ENCODE measurements at regions of chr15 and their contacts with region 1.

Region 1: GRCh38 chr15:50003786-50004334 is 115.2 kb downstream of the ATP8B4 start:
- DNase-seq: peak; percentile 37
- ATAC-seq: peak; percentile 100
- H3K4me3 ChIP-seq: no peak overlapping the region
- H3K27ac ChIP-seq: no peak overlapping the region
- H3K4me1 ChIP-seq: no peaks in the 10 kb centered on the region
- H3K27me3 ChIP-seq: no peaks in the 10 kb centered on the region; a peak in 2 of 4 replicates
- CTCF ChIP-seq: peak; percentile 71 to 80 (median 79)
- EP300 ChIP-seq: no peak
- POLR2A ChIP-seq: no peak
- RAD21 ChIP-seq: peak; percentile 70

Region 2: DNA sequence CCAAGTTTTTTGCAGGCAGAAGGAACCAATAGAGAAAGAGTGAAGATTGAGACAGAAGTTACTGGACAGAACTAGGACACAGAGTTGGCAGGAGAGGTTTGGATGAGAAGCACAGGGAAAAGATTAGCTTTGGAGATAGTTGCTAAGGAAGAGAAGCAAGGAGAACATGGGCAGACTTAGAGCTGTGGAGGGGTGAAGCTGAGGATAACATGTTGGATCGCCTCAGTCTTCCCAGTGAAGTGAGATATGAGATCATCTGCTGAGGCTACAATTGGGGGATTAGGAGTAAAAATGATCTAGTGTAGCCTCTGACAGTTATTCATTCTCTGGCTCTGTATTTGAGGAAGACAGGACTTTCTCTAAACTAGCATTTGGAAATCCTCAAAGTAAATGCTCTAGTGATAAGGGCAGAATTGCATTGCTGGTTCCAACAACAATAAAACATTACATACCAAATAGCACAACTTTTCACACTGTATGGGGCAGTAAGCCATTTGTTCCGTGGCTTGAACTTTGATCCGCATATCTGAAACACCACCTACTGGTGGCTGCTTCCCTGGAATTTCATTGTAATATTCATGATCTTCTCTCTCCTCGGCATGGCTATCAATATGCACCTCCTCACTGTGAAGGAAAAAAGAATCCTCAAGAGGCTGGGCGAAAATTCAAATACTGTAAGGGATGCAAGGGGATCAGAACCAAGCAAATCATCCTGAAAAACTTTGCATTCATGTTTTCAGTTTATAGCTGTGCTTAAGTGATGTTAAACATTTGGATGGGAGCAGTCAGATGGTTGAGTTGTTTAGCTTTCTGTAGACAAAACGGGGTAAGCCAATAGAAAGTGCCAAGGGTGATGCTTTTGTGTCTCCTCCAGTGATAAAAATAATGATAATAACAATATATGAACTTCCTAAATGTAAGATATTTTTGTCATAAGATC is 1148.1 kb before region 1 on chr15:
- CTCF ChIA-PET with region 1: no interaction called
- POLR2A ChIA-PET with region 1: no interaction called
- RAD21 ChIA-PET with region 1: no interaction called
- SMC1A ChIA-PET with region 1: interaction called, 3 read pairs
- in situ Hi-C with region 1: loop called (anchors 10 kb)
- intact Hi-C with region 1: loop called (anchors 10 kb)
- DNase-seq: no peak
- ATAC-seq: no peak
- H3K4me3 ChIP-seq: no peak overlapping the region
- H3K27ac ChIP-seq: no peak overlapping the region
- H3K4me1 ChIP-seq: no peaks in the 10 kb centered on the region
- H3K27me3 ChIP-seq: no peaks in the 10 kb centered on the region
- CTCF ChIP-seq: peak in 1 of 3 experiments; percentile 25; a peak in 2 of 6 replicates
- EP300 ChIP-seq: no peak
- POLR2A ChIP-seq: no peak
- RAD21 ChIP-seq: 0 out of 2 replicates have a peak, but pooled peaks have one; percentile 10

Region 3: DNA sequence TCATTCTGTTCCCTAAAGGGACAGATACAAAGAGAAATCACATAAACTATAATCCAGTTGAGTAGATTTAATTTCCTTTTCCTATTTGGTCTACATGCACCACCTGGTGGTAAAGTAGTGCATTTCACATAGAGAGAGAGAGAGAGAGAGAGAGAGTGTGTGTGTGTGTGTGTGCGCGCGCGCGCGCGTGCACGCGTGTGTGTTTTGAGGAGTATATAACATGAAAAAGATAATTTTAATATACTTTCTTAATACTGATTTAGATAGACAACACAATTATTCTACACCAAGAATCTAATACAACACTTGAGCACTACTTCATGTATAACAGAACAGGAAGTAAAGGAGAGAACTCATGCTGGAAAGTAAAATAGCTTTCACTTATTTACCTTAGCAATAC is 581.9 kb before region 1 on chr15:
- CTCF ChIA-PET with region 1: interaction called, 27 read pairs
- POLR2A ChIA-PET with region 1: no interaction called
- RAD21 ChIA-PET with region 1: interaction called, 18 read pairs
- SMC1A ChIA-PET with region 1: interaction called, 20 read pairs
- in situ Hi-C with region 1: no loop called
- intact Hi-C with region 1: no loop called
- DNase-seq: peak; percentile 12
- ATAC-seq: peak; percentile 72
- H3K4me3 ChIP-seq: no peak overlapping the region
- H3K27ac ChIP-seq: no peak overlapping the region
- H3K4me1 ChIP-seq: no peaks in the 10 kb centered on the region
- H3K27me3 ChIP-seq: no peaks in the 10 kb centered on the region
- CTCF ChIP-seq: peak; percentile 57 to 78 (median 66)
- EP300 ChIP-seq: no peak
- POLR2A ChIP-seq: no peak
- RAD21 ChIP-seq: peak; percentile 80

Region 4: GRCh38 chr15:49979705-49980382 is 24.0 kb before region 1 on chr15:
- CTCF ChIA-PET with region 1: interaction called, 12 read pairs
- POLR2A ChIA-PET with region 1: interaction called, 4 read pairs
- RAD21 ChIA-PET with region 1: interaction called, 19 read pairs
- SMC1A ChIA-PET with region 1: interaction called, 19 read pairs
- in situ Hi-C with region 1: no loop called
- intact Hi-C with region 1: no loop called
- DNase-seq: no peak
- ATAC-seq: peak; percentile 53; the same call in 2 of the 3 replicates
- H3K4me3 ChIP-seq: no peak overlapping the region
- H3K27ac ChIP-seq: no peak overlapping the region
- H3K4me1 ChIP-seq: no peaks in the 10 kb centered on the region; the same call in 1 of the 2 replicates
- H3K27me3 ChIP-seq: no peaks in the 10 kb centered on the region; a peak in 1 of 4 replicates
- CTCF ChIP-seq: no peak
- EP300 ChIP-seq: no peak
- POLR2A ChIP-seq: no peak
- RAD21 ChIP-seq: no peak

Region 5: GRCh38 chr15:50046867-50047266 is 43.0 kb after region 1 on chr15:
- CTCF ChIA-PET with region 1: interaction called, 114 read pairs
- POLR2A ChIA-PET with region 1: interaction called, 7 read pairs
- RAD21 ChIA-PET with region 1: interaction called, 50 read pairs
- SMC1A ChIA-PET with region 1: interaction called, 53 read pairs
- in situ Hi-C with region 1: no loop called
- intact Hi-C with region 1: no loop called
- DNase-seq: no peak
- ATAC-seq: peak; percentile 56
- H3K4me3 ChIP-seq: no peak overlapping the region
- H3K27ac ChIP-seq: no peak overlapping the region
- H3K4me1 ChIP-seq: no peaks in the 10 kb centered on the region
- H3K27me3 ChIP-seq: no peaks in the 10 kb centered on the region
- CTCF ChIP-seq: no peak
- EP300 ChIP-seq: no peak
- POLR2A ChIP-seq: no peak
- RAD21 ChIP-seq: no peak

Region 6: GRCh38 chr15:50315814-50316630 is 312.2 kb after region 1 on chr15:
- CTCF ChIA-PET with region 1: interaction called, 14 read pairs
- POLR2A ChIA-PET with region 1: no interaction called
- RAD21 ChIA-PET with region 1: interaction called, 3 read pairs
- SMC1A ChIA-PET with region 1: interaction called, 6 read pairs
- in situ Hi-C with region 1: no loop called
- intact Hi-C with region 1: loop called (anchors 10 kb)
- DNase-seq: no peak
- ATAC-seq: peak; percentile 77
- H3K4me3 ChIP-seq: no peak overlapping the region
- H3K27ac ChIP-seq: no peak overlapping the region
- H3K4me1 ChIP-seq: peaks cover 4% of the 10 kb centered on the region; the same call in 1 of the 2 replicates
- H3K27me3 ChIP-seq: no peaks in the 10 kb centered on the region
- CTCF ChIP-seq: peak; percentile 46 to 69 (median 66); a peak in 5 of 6 replicates
- EP300 ChIP-seq: no peak
- POLR2A ChIP-seq: no peak
- RAD21 ChIP-seq: peak; percentile 68